A549 (cell line): ENCODE measurements at regions of chr3 and their contacts with region 1.

Region 1: DNA sequence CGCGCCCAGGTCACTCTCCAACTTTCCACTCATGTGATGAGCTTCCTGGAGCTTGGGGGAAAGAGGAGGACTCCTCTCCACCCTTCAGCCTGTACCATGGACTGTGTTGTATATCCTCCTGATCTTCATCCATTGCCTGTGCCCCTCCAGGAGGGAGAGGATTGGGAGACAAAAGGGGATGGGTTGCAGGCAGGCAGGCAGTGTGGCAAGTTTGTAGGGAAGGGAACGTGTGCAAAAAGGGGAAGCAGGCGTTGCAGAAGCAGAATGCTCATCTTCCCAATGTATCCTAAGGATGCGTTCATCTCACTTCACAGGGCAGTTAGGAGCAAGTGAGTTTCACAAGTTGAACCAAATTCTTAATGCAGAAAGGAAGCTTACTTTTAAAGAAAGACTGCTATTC is 28.1 kb upstream of the GHSR start:
- DNase-seq: no peak
- ATAC-seq: peak; percentile 35 to 57; a peak in 4 of 6 replicates
- H3K4me3 ChIP-seq: peak overlapping the region; percentile 60
- H3K27ac ChIP-seq: peak overlapping the region; percentile 69 to 79; a peak in 5 of 6 replicates
- H3K4me1 ChIP-seq: peaks cover 6% of the 10 kb centered on the region; the same call in 2 of the 3 replicates
- CTCF ChIP-seq: no peak
- EP300 ChIP-seq: no peak
- POLR2A ChIP-seq: no peak
- RAD21 ChIP-seq: no peak

Region 2: GRCh38 chr3:171900446-171900845 is 575.9 kb before region 1 on chr3:
- CTCF ChIA-PET with region 1: no interaction called
- POLR2A ChIA-PET with region 1: no interaction called
- DNase-seq: no peak
- ATAC-seq: no peak
- H3K4me3 ChIP-seq: no peak overlapping the region
- H3K27ac ChIP-seq: peak overlapping the region in 1 of 2 experiments; percentile 56; a peak in 2 of 6 replicates
- H3K4me1 ChIP-seq: peaks cover 39% of the 10 kb centered on the region
- CTCF ChIP-seq: no peak
- EP300 ChIP-seq: no peak
- POLR2A ChIP-seq: no peak
- RAD21 ChIP-seq: no peak

Region 3: DNA sequence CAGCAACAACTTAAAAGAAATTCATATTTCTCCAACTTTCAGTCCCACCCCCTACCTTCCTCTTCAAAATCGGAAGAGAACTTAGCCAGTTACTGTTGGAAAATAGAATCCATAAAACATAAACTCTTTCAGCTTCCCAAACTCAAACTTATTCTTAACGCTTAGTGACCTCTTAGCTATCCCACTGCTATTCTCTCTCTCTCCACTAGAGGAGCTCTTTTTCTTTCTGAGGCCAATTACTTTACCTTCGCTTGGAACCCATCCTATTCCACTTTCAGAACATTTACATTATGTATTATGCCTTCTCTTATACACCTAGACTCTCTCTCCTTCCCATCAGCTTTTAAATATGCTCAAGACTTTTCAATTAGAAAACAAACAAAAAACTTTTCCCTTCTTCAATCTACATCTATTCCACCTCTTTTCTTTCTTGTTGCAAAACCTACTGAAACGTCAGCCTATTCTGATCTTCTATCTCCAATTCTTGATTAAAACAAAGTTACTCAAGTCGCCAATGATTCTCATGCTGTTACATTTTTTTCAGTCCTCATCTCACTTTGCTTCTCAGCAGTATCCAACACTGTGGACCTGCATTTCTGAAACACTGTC is 14.7 kb before region 1 on chr3:
- CTCF ChIA-PET with region 1: interaction called, 16 read pairs
- POLR2A ChIA-PET with region 1: no interaction called
- DNase-seq: peak; percentile 33 to 43
- ATAC-seq: peak in 1 of 2 experiments; percentile 72; a peak in 3 of 6 replicates
- H3K4me3 ChIP-seq: no peak overlapping the region
- H3K27ac ChIP-seq: no peak overlapping the region
- H3K4me1 ChIP-seq: peaks cover under 1% of the 10 kb centered on the region; the same call in 1 of the 3 replicates
- CTCF ChIP-seq: peak; percentile 56
- EP300 ChIP-seq: no peak
- POLR2A ChIP-seq: no peak
- RAD21 ChIP-seq: peak; percentile 18 to 47; a peak in 2 of 5 replicates